ENCODE measurements at regions of chrX and their contacts with region 1.

Region 1: GRCh38 chrX:67555578-67556203 is 11.9 kb downstream of the AR start:
- DNase-seq: no peak
- H3K4me3 Mint-ChIP-seq: no peak overlapping the region
- H3K27ac Mint-ChIP-seq: no peak overlapping the region
- H3K4me1 Mint-ChIP-seq: no peaks in the 10 kb centered on the region
- H3K27me3 Mint-ChIP-seq: no peaks in the 10 kb centered on the region

Region 2: DNA sequence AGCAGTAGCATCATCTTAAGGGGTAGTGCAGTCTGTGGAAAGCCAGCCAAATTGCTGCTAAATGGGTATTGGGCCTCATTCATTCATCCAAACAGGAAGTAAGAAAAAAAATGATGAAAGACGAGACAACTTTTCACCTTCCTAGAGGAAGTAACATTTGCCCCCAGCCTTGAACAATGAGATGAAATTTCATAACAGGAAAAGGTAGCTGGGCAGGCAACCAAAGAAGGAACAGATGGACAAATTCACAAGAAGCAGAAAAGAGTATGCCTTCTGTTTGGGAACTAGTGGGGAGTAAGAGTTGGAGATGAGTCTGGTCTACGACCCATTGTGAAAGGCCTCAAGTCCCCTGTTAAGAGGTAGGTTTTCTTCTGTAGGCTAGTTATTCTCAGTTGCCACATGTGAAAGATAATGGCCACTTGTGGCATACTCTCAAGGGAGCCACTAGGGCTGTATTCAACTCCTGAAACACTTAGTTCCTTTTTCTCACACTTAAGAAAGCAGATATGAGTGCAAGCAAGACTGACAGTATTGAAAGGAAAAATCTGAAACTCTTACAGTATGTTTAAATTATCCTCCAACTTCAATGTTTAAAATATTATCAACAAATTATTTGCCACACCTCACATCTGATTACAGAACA is 178.5 kb after region 1 on chrX:
- CTCF ChIA-PET with region 1: no interaction called
- intact Hi-C with region 1: no loop called
- DNase-seq: no peak
- H3K4me3 Mint-ChIP-seq: no peak overlapping the region
- H3K27ac Mint-ChIP-seq: no peak overlapping the region
- H3K4me1 Mint-ChIP-seq: no peaks in the 10 kb centered on the region
- H3K27me3 Mint-ChIP-seq: no peaks in the 10 kb centered on the region

Region 3: DNA sequence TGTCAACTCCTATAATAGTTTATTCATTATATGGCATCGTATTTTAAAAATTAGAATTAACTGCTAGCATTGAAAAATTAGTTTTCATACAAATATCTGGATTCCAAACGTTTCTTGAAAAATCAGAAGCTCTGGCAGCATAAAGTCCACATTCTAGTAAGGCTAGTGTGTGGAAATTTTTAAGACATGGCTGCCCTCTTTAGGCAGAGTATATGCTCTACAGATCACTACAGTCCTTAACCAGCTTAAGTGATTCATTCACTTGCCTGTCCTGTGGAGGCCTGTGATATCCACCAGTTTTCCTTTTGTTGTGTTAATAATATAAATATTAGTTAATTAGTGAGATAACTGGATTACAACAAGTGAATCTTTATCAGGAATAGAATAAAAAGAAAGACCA is 590.4 kb after region 1 on chrX:
- CTCF ChIA-PET with region 1: no interaction called
- intact Hi-C with region 1: loop called (anchors 5 kb)
- DNase-seq: no peak
- H3K4me3 Mint-ChIP-seq: no peak overlapping the region
- H3K27ac Mint-ChIP-seq: no peak overlapping the region
- H3K4me1 Mint-ChIP-seq: no peaks in the 10 kb centered on the region
- H3K27me3 Mint-ChIP-seq: no peaks in the 10 kb centered on the region

Region 4: DNA sequence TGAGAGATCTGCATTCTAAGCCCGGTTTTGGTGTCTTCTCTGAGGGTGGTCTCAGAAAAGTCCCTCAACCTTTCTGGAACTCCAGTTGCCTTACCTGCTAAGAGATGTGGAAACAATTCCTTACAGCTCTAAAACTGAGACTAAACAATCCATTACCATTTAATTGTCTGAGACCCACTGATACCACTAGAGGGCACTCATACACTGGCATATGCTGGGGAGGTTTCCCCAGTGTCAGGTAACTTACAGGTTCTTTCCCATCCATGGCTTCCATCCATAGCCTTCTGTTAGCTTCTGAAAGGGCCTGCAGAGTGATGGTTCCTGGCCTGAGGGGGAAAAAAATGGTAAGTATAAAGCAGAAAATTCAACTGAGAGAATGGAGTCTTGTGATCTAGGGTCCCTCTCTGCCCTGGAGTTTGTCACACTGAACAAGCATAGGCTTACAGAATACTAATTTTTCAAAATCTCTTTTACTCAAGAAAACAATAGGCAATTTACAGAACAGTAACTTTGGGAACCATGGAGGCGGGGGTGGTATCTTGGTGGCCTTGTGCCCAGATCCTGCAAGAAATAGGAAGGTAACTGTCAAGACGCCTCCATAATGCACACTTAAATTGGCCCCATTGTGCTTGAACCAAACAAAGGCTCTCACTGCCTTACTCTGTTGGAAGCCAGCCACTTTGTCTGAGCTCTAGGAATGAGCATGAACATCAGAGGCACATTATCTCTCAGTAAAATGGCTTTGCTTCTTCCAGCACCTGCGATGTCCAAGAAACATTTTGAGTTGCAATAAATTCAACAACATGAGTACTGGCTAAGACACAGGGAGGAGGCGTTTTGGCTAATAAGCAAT is 641.5 kb after region 1 on chrX:
- CTCF ChIA-PET with region 1: no interaction called
- intact Hi-C with region 1: no loop called
- DNase-seq: peak; percentile 43
- H3K4me3 Mint-ChIP-seq: no peak overlapping the region
- H3K27ac Mint-ChIP-seq: no peak overlapping the region
- H3K4me1 Mint-ChIP-seq: no peaks in the 10 kb centered on the region
- H3K27me3 Mint-ChIP-seq: no peaks in the 10 kb centered on the region

Measured in activated naive CD4-positive, alpha-beta T cell treated with anti-CD3 and anti-CD28 coated beads for 36 hours (primary cell).